Naive thymus-derived CD8-positive, alpha-beta T cell (primary cell): ENCODE measurements at regions of chr7 and their contacts with region 1.

Region 1: GRCh38 chr7:7182156-7183060 is at the start of gene C1GALT1:
- DNase-seq: peak; percentile 87 to 98 (median 98)
- ATAC-seq: peak; percentile 80 to 82
- H3K4me3 Mint-ChIP-seq: peak within 1 kb of the TSS; percentile 91 to 100 (median 96)
- H3K27ac Mint-ChIP-seq: peak within 1 kb of the TSS; percentile 86 to 99 (median 98)
- H3K4me1 Mint-ChIP-seq: peaks cover 7 to 15% (median 8%) of the 10 kb centered on the region in 4 donors
- H3K27me3 Mint-ChIP-seq: no peaks in the 10 kb centered on the region
- polyA plus RNA-seq, gene C1GALT1: 41.7 to 72.6 (median 63.4) TPM

Region 2: GRCh38 chr7:7103343-7104313 is 78.8 kb before region 1 on chr7:
- POLR2A ChIA-PET with region 1: interaction called, 77 read pairs
- DNase-seq: peak in 4 of 10 donors; percentile 9 to 68 (median 67)
- ATAC-seq: peak; percentile 81 to 87
- H3K4me3 Mint-ChIP-seq: peak overlapping the region in 1 of 10 donors; percentile 10
- H3K27ac Mint-ChIP-seq: peak overlapping the region in 4 of 10 donors; percentile 20 to 75 (median 42)
- H3K4me1 Mint-ChIP-seq: peaks cover 5 to 31% (median 25%) of the 10 kb centered on the region in 4 donors
- H3K27me3 Mint-ChIP-seq: no peaks in the 10 kb centered on the region

Region 3: GRCh38 chr7:7151285-7151684 is 31.1 kb before region 1 on chr7:
- POLR2A ChIA-PET with region 1: interaction called, 16 read pairs
- DNase-seq: no peak
- ATAC-seq: no peak
- H3K4me3 Mint-ChIP-seq: peak overlapping the region in 1 of 10 donors; percentile 8
- H3K27ac Mint-ChIP-seq: peak overlapping the region in 2 of 10 donors; percentile 41 to 49
- H3K4me1 Mint-ChIP-seq: peaks cover 20 to 42% (median 32%) of the 10 kb centered on the region in 4 donors
- H3K27me3 Mint-ChIP-seq: no peaks in the 10 kb centered on the region

Region 4: DNA sequence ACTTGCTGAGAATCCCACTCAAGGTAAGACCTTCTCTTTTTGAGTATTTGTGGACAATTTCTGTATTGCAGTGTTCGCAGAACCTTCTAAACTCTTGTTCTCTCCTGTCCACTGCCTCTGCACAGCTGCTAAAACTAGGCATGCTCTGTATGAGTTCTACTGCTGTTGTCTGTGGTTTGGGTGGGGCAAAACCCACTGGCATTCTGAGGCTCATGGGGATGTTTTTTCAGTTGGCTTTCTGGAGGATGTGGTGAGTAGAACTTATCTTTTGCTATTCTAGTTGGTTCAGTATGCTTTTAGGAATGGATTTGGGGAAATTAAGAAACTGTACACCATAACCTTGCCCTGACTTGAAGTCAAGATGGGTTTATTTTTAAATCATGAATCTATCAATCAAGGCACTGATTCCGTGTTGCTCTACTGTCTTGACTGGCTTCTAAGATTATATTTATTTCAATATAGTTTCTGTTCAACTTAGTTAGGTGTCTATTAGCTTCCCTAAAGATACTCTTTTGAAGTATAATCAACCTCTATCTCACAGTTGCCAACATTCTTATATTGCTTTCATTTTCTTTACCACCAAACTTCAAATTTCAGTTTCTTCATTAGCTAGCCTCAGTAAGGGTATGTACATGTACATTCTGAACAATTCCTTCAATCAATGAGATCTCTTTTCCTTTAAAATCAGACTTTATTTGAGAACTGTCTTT is 25.1 kb before region 1 on chr7:
- POLR2A ChIA-PET with region 1: interaction called, 96 read pairs
- DNase-seq: peak; percentile 17 to 89 (median 71)
- ATAC-seq: peak; percentile 96 to 98
- H3K4me3 Mint-ChIP-seq: peak overlapping the region; percentile 53 to 88 (median 82)
- H3K27ac Mint-ChIP-seq: peak overlapping the region; percentile 9 to 97 (median 94)
- H3K4me1 Mint-ChIP-seq: peaks cover 37 to 66% (median 60%) of the 10 kb centered on the region in 4 donors
- H3K27me3 Mint-ChIP-seq: no peaks in the 10 kb centered on the region

Region 5: GRCh38 chr7:7164591-7164990 is 17.8 kb before region 1 on chr7:
- POLR2A ChIA-PET with region 1: interaction called, 96 read pairs
- DNase-seq: no peak
- ATAC-seq: no peak
- H3K4me3 Mint-ChIP-seq: peak overlapping the region in 5 of 10 donors; percentile 11 to 47 (median 24)
- H3K27ac Mint-ChIP-seq: peak overlapping the region in 8 of 10 donors; percentile 13 to 72 (median 46)
- H3K4me1 Mint-ChIP-seq: peaks cover 29 to 59% (median 50%) of the 10 kb centered on the region in 4 donors
- H3K27me3 Mint-ChIP-seq: no peaks in the 10 kb centered on the region

Region 6: DNA sequence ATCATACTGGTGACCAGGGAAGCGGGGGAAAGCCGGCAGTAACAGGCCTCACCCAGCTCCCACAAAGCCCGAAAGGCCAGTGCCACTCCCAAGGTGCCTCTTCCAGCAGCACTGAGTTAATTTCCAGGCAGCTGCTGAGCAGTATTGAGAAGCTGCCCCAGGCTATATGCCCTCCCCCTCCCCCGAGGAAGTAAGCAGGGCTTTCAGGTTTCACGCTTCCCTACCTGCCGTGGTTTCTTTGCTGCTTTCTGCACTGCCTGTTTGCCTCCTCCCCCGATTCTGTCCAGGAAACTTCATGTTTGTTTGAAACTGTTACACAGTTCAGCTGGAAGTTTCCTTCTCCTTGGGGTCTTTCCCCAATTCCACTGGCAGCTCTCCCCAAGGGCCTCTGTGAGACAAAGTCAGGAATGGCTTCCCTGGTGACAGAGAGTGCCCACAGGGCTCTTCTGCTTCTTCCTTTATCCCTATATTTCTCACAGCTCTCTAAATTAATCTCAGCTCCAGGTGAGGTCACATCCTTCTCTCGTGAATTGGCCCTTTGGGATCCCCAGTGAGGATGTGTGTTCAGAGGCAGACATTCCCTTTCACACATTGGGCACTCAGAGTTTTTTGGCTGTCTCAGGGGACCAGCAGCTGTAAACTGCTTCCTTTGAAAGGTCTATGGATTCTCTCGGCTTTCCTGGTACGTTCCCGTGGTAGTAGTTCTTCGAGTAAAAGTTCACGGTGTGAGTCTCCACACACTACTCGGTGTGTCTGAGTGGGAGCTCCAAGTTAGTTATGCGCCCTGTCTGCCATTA is 19.4 kb after region 1 on chr7:
- POLR2A ChIA-PET with region 1: interaction called, 17 read pairs
- DNase-seq: peak; percentile 15 to 69 (median 44)
- ATAC-seq: peak; percentile 93 to 96
- H3K4me3 Mint-ChIP-seq: peak overlapping the region; percentile 58 to 88 (median 80)
- H3K27ac Mint-ChIP-seq: peak overlapping the region; percentile 83 to 94 (median 90)
- H3K4me1 Mint-ChIP-seq: peaks cover 52 to 96% (median 81%) of the 10 kb centered on the region in 4 donors
- H3K27me3 Mint-ChIP-seq: peaks cover 0 to 1% (median 0%) of the 10 kb centered on the region in 5 donors

Region 7: DNA sequence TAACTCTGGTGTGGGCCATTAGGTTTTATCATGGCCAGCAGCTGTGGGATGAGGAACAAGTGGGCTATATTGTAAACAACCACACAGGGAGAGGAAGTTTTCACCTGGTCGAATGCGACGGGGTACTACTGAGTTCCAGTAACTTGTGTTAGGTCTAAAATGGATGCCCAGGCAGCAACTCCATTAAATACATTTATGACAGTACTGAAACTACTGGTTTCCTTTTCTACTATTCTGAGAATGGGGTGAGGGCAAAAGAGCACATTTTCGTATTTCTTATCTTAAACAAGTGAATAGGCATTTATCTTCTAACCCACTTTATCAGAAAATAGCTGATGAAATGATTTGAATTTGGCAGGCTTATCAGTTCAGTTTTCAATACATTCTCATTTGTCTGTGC is 109.7 kb after region 1 on chr7:
- POLR2A ChIA-PET with region 1: no interaction called
- DNase-seq: no peak
- ATAC-seq: no peak
- H3K4me3 Mint-ChIP-seq: no peak overlapping the region
- H3K27ac Mint-ChIP-seq: no peak overlapping the region
- H3K4me1 Mint-ChIP-seq: no peaks in the 10 kb centered on the region
- H3K27me3 Mint-ChIP-seq: no peaks in the 10 kb centered on the region